OCI-LY7 (cell line): ENCODE measurements at regions of chr6 and their contacts with region 1.

Region 1: DNA sequence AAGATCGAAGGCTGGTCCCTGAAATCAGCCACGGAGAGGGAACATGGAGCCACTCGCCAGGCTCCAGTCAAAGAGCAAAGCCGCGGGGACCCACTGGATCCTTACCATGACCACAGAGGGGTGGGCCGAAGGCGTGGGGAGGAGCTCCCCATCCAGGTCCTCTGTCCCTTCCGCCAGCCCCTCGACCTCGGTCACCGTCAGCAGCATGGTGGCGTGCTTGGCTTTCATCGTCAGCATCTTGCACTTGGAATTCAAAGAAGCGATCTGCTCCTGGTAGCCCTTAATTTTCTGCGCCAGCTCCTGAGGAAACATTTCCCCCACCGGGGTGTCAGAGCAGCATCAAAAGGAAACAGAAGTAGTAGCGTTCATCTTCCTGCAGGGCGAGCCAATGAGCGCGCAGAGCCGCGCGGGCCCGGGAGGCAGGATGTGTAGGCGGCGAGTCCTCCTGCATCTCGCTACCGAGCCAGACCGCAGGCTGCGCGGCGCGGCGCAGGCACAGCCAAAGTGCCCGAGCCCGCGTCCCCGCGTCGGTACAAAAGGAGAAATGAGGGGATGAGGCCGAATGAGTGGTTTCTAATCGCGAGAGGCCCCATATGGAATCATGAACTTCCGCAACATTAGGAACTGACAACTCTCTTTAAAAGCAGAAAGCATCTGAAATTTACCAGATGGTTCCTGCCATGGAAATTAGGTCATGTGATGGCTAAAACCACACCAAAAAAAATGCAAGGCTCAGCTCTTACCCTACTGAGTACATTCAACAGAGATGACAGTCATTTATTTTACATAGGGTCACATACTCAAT is 335.2 kb downstream of the SYNE1 start:
- DNase-seq: peak; percentile 91
- H3K4me3 ChIP-seq: peak overlapping the region; percentile 79
- H3K27ac ChIP-seq: peak overlapping the region; percentile 88
- H3K4me1 ChIP-seq: peaks cover 43% of the 10 kb centered on the region
- CTCF ChIP-seq: peak; percentile 64

Region 2: GRCh38 chr6:151390276-151391032 is 911.5 kb before region 1 on chr6:
- CTCF ChIA-PET with region 1: no interaction called
- POLR2A ChIA-PET with region 1: no interaction called
- intact Hi-C with region 1: loop called (anchors 5 kb)
- DNase-seq: peak; percentile 99
- H3K4me3 ChIP-seq: peak overlapping the region; percentile 99
- H3K27ac ChIP-seq: peak overlapping the region; percentile 97
- H3K4me1 ChIP-seq: peaks cover 55% of the 10 kb centered on the region
- CTCF ChIP-seq: no peak

Region 3: DNA sequence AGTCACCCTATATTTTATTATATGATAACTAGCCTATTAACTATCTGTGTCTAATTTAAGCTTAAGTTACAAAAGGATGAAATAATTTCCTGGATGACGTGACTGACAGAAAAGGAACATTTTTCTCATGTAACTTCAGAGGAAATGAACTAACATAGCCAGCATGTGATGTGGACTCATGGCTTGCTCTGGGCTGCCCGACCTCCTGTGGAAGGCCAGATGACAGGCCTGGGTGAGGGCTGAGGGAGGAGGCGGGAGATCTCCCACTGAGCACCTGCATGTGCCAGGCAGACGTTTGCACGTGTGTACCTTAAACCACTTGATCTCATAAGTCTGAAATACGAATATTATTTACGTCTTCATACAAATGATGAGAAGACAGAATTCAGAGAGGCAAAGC is 14.1 kb after region 1 on chr6:
- CTCF ChIA-PET with region 1: interaction called, 4 read pairs
- POLR2A ChIA-PET with region 1: interaction called, 29 read pairs
- intact Hi-C with region 1: no loop called
- DNase-seq: peak; percentile 20
- H3K4me3 ChIP-seq: no peak overlapping the region
- H3K27ac ChIP-seq: no peak overlapping the region
- H3K4me1 ChIP-seq: peaks cover 9% of the 10 kb centered on the region
- CTCF ChIP-seq: no peak

Region 4: GRCh38 chr6:152432758-152433157 is 130.8 kb after region 1 on chr6:
- CTCF ChIA-PET with region 1: no interaction called
- POLR2A ChIA-PET with region 1: no interaction called
- intact Hi-C with region 1: no loop called
- DNase-seq: no peak
- H3K4me3 ChIP-seq: no peak overlapping the region
- H3K27ac ChIP-seq: no peak overlapping the region
- H3K4me1 ChIP-seq: no peaks in the 10 kb centered on the region
- CTCF ChIP-seq: no peak

Region 5: GRCh38 chr6:152680879-152681517 is 379.0 kb after region 1 on chr6:
- CTCF ChIA-PET with region 1: no interaction called
- POLR2A ChIA-PET with region 1: interaction called, 13 read pairs
- intact Hi-C with region 1: loop called (anchors 2 kb)
- DNase-seq: no peak
- H3K4me3 ChIP-seq: peak overlapping the region; percentile 70
- H3K27ac ChIP-seq: peak overlapping the region; percentile 96
- H3K4me1 ChIP-seq: peaks cover 66% of the 10 kb centered on the region
- CTCF ChIP-seq: no peak

Region 6: GRCh38 chr6:153002607-153003365 is 700.8 kb after region 1 on chr6 and contains the start of gene MTRF1L:
- CTCF ChIA-PET with region 1: no interaction called
- POLR2A ChIA-PET with region 1: no interaction called
- intact Hi-C with region 1: loop called (anchors 5 kb)
- DNase-seq: peak; percentile 96
- H3K4me3 ChIP-seq: peak within 1 kb of the TSS; percentile 75
- H3K27ac ChIP-seq: peak within 1 kb of the TSS; percentile 57
- H3K4me1 ChIP-seq: peaks cover 22% of the 10 kb centered on the region
- CTCF ChIP-seq: no peak
- total RNA-seq, gene MTRF1L: 10.4 and 11.0 TPM in 2 replicates